ENCODE measurements at regions of chr19 and their contacts with region 1.

Region 1: DNA sequence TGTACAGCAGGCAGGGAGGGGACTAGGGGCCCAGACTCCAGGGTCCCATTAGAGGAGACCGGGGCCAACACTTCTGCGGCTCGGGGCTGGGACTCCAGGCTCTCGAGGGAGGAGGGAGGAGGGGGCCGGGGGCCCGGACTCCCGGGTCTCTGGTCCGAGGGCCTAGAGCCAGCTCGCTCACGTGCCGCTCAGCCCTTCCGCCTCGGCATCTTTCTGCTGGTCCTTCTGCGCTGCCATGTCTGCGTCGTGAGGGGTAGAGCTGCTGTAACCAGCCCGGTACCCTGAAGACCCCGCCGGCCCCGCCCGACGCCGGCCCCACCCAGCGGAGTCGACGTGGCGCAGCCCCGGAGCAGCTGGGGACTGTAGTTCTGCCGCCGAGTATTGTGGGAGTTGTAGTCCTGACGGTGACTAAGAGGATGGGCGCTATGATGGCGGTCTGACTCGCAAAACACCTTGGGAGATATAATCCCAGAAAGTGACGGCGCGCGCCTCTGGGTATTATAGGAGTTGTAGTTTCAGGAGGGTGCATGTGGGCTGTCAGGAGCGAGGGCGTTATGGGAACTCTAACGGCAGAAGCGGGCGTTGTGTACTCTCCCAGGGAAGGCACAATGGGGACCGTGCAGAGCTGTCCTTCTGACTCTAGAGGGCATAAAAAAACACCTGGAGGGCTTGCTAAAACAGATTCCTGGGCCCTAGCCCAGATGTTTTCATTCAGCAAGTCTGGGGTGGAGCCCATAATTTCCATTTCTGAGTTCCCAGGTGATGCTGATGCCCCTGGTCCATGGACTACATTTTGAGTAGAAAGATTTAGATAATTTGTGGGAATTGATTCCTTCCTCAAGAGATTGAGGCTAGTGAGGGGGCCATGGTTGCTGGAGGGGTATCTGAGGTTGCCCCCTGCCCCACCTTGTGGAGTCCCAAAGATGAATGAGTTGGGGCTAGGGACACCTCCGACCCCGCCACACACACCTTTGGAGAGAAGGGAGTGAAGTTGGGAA is at the start of gene RABAC1:
- DNase-seq: peak; percentile 84
- H3K4me3 Mint-ChIP-seq: peak within 1 kb of the TSS; percentile 95
- H3K27ac Mint-ChIP-seq: peak within 1 kb of the TSS; percentile 85
- H3K4me1 Mint-ChIP-seq: peaks cover 11% of the 10 kb centered on the region
- H3K27me3 Mint-ChIP-seq: no peaks in the 10 kb centered on the region
- total RNA-seq, gene RABAC1: 54.0 and 57.6 TPM in 2 replicates

Region 2: GRCh38 chr19:42032431-42032830 is 73.1 kb after region 1 on chr19:
- intact Hi-C with region 1: loop called (anchors 2 kb)
- DNase-seq: no peak
- H3K4me3 Mint-ChIP-seq: no peak overlapping the region
- H3K27ac Mint-ChIP-seq: no peak overlapping the region
- H3K4me1 Mint-ChIP-seq: peaks cover 3% of the 10 kb centered on the region
- H3K27me3 Mint-ChIP-seq: peaks cover 4% of the 10 kb centered on the region